ENCODE measurements at regions of chr9 and their contacts with region 1.

Region 1: DNA sequence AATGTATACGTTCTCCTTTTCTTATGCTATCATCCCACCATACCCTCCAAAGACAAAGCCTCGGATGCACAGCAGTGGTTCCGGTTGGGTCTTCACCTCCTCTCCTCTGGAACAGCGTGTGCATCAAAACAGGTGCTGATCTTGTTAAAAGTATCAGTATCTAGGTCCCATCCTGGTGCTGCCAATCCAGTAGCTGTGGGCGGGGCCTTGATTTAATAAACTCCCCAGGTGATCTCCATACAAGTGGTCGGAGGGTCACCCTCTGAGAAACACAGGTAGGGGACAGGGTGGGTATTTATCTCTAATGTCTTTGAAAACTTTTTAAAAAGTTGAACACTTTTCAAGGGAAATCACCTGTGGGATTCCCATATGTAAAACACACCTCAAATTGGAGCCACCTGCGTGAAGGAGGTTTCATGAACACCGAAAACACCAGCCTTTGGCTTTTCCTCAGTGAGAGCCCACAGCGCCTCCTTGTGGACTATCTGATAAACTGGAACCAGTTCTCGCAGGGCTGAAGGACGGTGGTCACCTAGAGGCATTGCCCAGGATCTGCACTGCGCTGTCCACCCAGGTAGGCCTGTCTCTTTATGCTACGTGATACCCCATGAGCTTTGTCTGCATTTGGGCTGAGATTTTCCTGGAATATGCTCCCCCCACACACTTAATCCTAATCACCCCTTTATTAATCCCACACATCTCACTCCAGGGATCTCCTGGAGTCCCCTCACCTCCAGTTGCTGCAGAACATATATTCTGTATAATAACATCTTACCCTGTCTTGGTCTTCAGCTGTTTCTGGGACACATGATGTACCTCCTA is 80.5 kb upstream of the EPB41L4B start:
- ATAC-seq: peak in 4 of 8 experiments; percentile 51 to 91 (median 64)
- H3K4me3 ChIP-seq: no peak overlapping the region
- H3K27ac ChIP-seq: no peak overlapping the region
- H3K4me1 ChIP-seq: peaks cover 3 to 5% of the 10 kb centered on the region in 2 donors

Region 2: GRCh38 chr9:109206670-109207069 is 194.7 kb before region 1 on chr9:
- in situ Hi-C with region 1: loop called in 1 of 9 experiments (anchors 25 kb)
- ATAC-seq: peak in 1 of 8 experiments; percentile 43
- H3K4me3 ChIP-seq: no peak overlapping the region
- H3K27ac ChIP-seq: no peak overlapping the region
- H3K4me1 ChIP-seq: no peaks in the 10 kb centered on the region